ENCODE measurements at regions of chrX and their contacts with region 1.

Region 1: GRCh38 chrX:48574270-48575266 is at the start of gene RBM3:
- DNase-seq: peak; percentile 91 to 93
- H3K4me3 ChIP-seq: peak within 1 kb of the TSS; percentile 80
- H3K4me3 Mint-ChIP-seq: peak within 1 kb of the TSS; percentile 94
- H3K27ac Mint-ChIP-seq: peak within 1 kb of the TSS; percentile 99
- H3K4me1 ChIP-seq: peaks cover 29% of the 10 kb centered on the region
- H3K4me1 Mint-ChIP-seq: peaks cover 2% of the 10 kb centered on the region
- H3K27me3 ChIP-seq: no peaks in the 10 kb centered on the region
- H3K27me3 Mint-ChIP-seq: no peaks in the 10 kb centered on the region
- CTCF ChIP-seq: peak in 1 of 2 experiments; percentile 25
- total RNA-seq, gene RBM3: 233 and 264 TPM in 2 replicates

Region 2: DNA sequence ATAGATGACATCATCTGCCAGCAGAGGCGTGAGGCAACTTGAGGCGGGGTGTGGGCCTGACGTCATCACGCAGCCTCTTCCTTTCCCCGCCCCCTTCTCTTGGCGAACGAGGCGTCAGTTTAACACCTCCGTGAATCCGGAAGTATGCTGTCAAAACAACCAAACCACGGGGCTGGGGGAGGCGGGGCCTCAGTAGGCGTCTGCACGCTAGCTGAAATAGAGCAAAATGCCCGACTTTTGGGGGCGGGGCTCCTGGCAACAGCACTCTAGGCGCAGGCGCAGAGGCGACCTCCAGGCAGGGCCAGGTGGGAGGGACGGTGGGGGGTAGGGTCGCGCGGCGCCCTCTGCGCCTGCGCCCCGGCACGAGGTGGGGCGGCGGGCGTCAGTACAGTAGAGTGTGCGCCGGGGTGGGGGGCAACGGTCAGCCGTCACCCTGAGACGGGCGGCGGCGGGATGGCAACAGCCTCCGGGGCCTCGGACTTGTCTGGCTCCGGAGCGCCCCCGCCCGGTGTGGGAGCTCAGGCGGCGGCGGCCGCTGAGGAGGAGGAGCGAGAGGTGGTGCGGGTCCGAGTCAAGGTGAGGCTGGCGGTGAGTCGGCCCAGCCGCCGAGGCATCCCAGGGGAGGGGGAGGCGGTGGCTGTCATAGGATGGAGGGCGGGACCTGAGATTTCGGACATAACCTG is 35.1 kb before region 1 on chrX and contains the start of gene TBC1D25:
- CTCF ChIA-PET with region 1: interaction called, 8 read pairs
- POLR2A ChIA-PET with region 1: interaction called, 9 read pairs
- intact Hi-C with region 1: loop called (anchors 1 kb)
- DNase-seq: peak; percentile 96 to 98
- H3K4me3 ChIP-seq: peak within 1 kb of the TSS; percentile 68
- H3K4me3 Mint-ChIP-seq: peak within 1 kb of the TSS; percentile 87
- H3K27ac Mint-ChIP-seq: peak within 1 kb of the TSS; percentile 71
- H3K4me1 ChIP-seq: no peaks in the 10 kb centered on the region
- H3K4me1 Mint-ChIP-seq: peaks cover 8% of the 10 kb centered on the region
- H3K27me3 ChIP-seq: no peaks in the 10 kb centered on the region
- H3K27me3 Mint-ChIP-seq: no peaks in the 10 kb centered on the region
- CTCF ChIP-seq: peak in 1 of 2 experiments; percentile 27
- total RNA-seq, gene TBC1D25: 9.3 and 11.1 TPM in 2 replicates

Region 3: GRCh38 chrX:48606091-48606490 is 31.5 kb after region 1 on chrX:
- CTCF ChIA-PET with region 1: no interaction called
- POLR2A ChIA-PET with region 1: no interaction called
- intact Hi-C with region 1: no loop called
- DNase-seq: no peak
- H3K4me3 ChIP-seq: no peak overlapping the region
- H3K4me3 Mint-ChIP-seq: no peak overlapping the region
- H3K27ac Mint-ChIP-seq: no peak overlapping the region
- H3K4me1 ChIP-seq: no peaks in the 10 kb centered on the region
- H3K4me1 Mint-ChIP-seq: no peaks in the 10 kb centered on the region
- H3K27me3 ChIP-seq: no peaks in the 10 kb centered on the region
- H3K27me3 Mint-ChIP-seq: no peaks in the 10 kb centered on the region
- CTCF ChIP-seq: no peak

Measured in Caco-2 (cell line).